Body of pancreas (tissue), 4 donors: ENCODE measurements at regions of chr5 and their contacts with region 1.

Region 1: DNA sequence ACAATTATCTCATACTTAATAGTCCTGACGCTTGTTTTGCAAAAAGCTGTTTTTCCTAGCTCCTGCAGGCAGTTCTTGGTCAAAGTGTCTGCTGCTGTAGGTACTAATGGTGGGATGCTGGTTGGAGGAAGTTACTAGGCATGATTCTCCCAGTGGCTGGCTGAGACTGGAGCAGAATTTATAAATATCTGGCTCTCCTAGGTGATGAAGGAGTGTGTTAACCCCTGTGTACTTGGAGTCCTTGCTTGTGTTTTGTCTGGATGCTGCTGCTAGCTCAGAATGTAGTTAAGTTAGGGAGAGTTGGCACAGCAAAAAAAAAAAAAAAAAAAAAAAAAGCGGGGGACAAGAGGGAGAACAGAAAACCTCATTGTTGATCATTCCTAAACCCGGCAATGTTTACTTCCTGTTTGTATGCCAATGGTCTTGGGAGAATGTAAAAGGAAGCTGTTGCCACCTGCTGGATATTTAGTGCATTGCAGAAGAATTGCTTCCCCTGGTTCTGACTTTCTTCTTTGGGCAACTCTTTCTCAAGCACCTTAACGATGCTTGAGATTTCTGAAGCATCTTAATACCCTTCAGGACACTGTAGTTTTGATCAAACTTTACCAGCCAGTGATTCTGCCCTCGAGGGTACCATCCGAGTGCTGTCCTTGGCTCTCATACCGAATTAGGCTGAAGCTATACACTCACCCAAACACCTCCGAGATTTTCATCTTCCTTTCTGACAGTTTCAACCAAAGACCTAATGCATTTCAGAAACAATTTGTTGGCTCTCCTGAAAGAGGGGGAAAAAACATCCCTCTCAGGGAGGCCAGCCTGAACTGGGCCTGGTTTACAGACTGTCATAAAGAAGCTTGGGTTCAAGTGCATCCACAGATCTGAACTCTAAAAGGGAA is 71.7 kb upstream of the WWC1 start:
- DNase-seq: peak; percentile 63 to 78 (median 68)
- ATAC-seq: peak; percentile 83
- H3K4me3 ChIP-seq: no peak overlapping the region
- H3K27ac ChIP-seq: no peak overlapping the region
- H3K4me1 ChIP-seq: peaks cover 5% of the 10 kb centered on the region
- H3K27me3 ChIP-seq: no peaks in the 10 kb centered on the region
- CTCF ChIP-seq: peak; percentile 74 to 97 (median 95)
- POLR2A ChIP-seq: no peak

Region 2: DNA sequence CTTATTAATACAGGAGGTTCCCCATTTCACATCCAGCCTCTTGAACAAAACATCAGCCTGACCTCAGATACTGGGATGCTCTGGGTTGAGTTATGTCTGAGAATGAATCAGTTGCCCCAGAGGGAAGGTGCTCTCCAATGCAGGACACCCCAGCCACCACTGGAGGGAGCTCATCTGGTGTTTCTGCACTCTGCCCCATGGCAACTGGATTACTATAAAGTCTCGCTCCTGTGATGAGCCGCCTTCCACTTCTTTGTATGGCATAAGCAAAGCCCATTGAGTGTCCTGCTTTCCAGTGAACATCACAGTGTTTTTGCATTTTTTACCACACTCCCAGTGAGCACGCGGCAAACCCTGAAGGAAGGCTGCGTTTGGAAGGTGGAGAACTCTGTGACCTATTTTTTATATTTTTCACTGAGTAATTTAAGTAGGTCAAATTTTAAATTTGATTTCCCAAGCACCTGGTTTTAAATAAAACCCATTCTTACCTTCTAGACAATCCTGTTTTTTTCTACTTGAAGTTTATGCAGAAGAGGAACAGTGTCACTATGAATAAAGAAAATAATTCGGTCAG is 105.2 kb before region 1 on chr5:
- intact Hi-C with region 1: loop called (anchors 10 kb)
- DNase-seq: peak; percentile 58 to 80 (median 70)
- ATAC-seq: peak; percentile 70
- H3K4me3 ChIP-seq: no peak overlapping the region
- H3K27ac ChIP-seq: no peak overlapping the region
- H3K4me1 ChIP-seq: no peaks in the 10 kb centered on the region
- H3K27me3 ChIP-seq: no peaks in the 10 kb centered on the region
- CTCF ChIP-seq: peak; percentile 56 to 86 (median 65)
- POLR2A ChIP-seq: no peak